GM12878 (cell line): ENCODE measurements at regions of chr12 and their contacts with region 1.

Region 1: DNA sequence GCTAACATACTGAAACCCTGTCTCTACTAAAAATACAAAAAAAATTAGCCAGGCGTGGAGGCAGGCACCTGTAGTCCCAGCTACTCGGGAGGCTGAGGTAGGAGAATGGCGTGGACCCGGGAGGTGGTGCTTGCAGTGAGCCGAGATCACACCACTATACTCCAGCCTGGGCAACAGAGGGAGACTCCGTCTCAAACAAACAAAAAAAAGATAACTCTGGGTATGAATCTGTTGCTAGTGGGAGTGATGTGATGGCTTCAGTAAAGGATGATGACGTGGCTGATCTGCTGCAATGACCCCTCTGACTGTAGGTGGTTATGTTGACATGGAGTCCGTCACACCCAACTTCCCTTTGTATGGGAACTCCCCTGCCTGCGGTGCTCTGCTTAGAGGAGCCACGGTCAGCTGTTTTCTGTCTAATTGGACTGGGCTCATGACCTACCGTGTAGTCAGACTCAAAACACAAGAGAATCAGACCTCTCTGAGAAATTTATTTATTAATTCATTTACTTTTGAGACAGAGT is 59.1 kb upstream of the MED13L start:
- DNase-seq: peak; percentile 67
- ATAC-seq: peak; percentile 91
- H3K4me3 ChIP-seq: no peak overlapping the region
- H3K27ac ChIP-seq: peak overlapping the region; percentile 51
- H3K4me1 ChIP-seq: peaks cover 37% of the 10 kb centered on the region
- H3K27me3 ChIP-seq: no peaks in the 10 kb centered on the region
- CTCF ChIP-seq: no peak
- EP300 ChIP-seq: peak in 1 of 2 experiments; percentile 43; a peak in 1 of 4 replicates
- POLR2A ChIP-seq: no peak
- RAD21 ChIP-seq: no peak

Region 2: DNA sequence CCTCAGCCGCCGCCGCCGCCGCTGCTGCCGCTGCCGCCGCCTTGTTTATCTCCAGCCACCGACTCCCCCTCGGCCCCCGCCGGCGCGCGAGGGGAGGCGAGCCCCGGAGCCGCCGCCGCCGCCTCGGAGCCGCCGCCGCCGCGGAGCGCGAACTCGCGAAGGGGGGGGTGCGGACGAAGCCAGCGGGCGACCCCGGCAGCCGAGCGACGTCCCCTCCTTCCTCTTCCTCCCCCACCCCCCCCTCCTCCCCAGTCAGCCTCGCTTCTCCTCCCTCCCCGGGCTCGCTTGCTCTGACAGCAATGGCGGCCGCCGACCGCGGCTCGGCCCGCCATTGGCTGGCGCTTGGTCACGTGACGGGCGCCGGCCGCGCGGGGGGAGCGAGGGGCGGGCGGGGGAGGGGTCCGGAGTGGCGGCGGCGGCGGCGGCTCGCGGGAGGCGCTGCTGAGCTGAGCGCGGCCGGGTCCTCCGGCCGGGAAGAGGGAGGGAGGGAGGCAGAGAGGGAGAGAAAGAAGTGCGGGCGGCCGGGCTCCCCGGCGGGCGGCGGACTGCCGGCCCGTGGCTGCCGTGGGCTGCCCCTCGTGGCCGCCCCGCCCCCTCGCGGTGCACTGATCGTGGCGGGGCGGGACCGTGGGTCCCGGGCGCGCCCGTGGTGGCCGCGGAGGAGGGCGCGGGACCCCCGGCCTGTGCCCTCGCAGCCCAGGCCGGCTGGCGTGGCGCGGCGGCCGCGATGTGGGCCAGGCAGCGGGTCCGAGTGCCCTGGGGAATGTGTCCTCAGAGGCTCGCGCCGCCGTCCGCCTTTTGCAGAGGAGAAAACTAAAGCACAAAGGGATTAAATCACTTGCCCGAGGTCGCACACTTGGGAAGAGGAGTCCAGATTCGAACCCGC is 59.0 kb before region 1 on chr12 and contains the start of gene MED13L:
- CTCF ChIA-PET with region 1: no interaction called
- POLR2A ChIA-PET with region 1: no interaction called
- RAD21 ChIA-PET with region 1: no interaction called
- SMC1A ChIA-PET with region 1: no interaction called
- in situ Hi-C with region 1: no loop called
- intact Hi-C with region 1: loop called (anchors 5 kb)
- DNase-seq: no peak
- ATAC-seq: peak; percentile 82
- H3K4me3 ChIP-seq: peak within 1 kb of the TSS; percentile 81
- H3K27ac ChIP-seq: peak within 1 kb of the TSS; percentile 43; the same call in 1 of the 2 replicates
- H3K4me1 ChIP-seq: no peaks in the 10 kb centered on the region
- H3K27me3 ChIP-seq: peaks cover 0 to 10% of the 10 kb centered on the region in 2 experiments; a peak in 2 of 4 replicates
- CTCF ChIP-seq: peak in 2 of 3 experiments; percentile 6 to 28; a peak in 2 of 6 replicates
- EP300 ChIP-seq: no peak
- POLR2A ChIP-seq: peak; percentile 75
- RAD21 ChIP-seq: 0 out of 2 replicates have a peak, but pooled peaks have one; percentile 25
- polyA plus RNA-seq, gene MED13L: 3.7 to 7.5 TPM

Region 3: DNA sequence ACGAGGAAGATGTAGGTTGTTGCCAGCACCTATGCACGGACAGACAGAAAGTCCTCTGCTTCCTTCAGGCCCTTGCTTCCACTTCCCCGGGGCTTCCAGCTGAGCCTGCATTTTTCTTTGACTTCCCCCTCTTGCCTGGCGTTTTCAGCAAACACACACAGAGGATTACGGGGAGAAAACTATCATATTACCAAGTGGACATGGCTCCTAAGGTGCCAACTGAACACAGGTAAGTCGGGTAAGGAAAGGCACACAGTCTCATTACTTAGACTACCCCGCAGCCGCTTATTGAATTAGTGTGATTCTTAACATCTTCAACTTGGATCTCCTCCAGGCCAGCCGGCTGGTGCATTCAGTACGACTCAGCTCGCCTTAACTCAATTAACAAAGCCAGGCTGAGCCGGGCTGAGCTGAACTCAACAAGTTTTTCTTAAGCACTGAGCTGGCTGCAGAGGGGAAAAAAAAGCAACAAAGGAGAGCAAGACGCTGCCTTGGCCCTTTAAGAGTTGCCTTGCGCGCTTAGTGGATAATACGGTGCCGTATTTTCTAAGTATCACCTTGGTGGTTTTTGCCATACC is 203.4 kb after region 1 on chr12:
- CTCF ChIA-PET with region 1: no interaction called
- POLR2A ChIA-PET with region 1: no interaction called
- RAD21 ChIA-PET with region 1: no interaction called
- SMC1A ChIA-PET with region 1: no interaction called
- in situ Hi-C with region 1: no loop called
- intact Hi-C with region 1: loop called (anchors 2 kb)
- DNase-seq: no peak
- ATAC-seq: no peak
- H3K4me3 ChIP-seq: no peak overlapping the region
- H3K27ac ChIP-seq: no peak overlapping the region
- H3K4me1 ChIP-seq: peaks cover 34% of the 10 kb centered on the region
- H3K27me3 ChIP-seq: no peaks in the 10 kb centered on the region
- CTCF ChIP-seq: no peak
- EP300 ChIP-seq: no peak
- POLR2A ChIP-seq: no peak
- RAD21 ChIP-seq: no peak

Region 4: GRCh38 chr12:116673681-116674111 is 337.1 kb after region 1 on chr12:
- CTCF ChIA-PET with region 1: no interaction called
- POLR2A ChIA-PET with region 1: no interaction called
- RAD21 ChIA-PET with region 1: no interaction called
- SMC1A ChIA-PET with region 1: no interaction called
- in situ Hi-C with region 1: no loop called
- intact Hi-C with region 1: loop called (anchors 1 kb)
- DNase-seq: no peak
- ATAC-seq: no peak
- H3K4me3 ChIP-seq: no peak overlapping the region
- H3K27ac ChIP-seq: peak overlapping the region; percentile 51
- H3K4me1 ChIP-seq: peaks cover 23% of the 10 kb centered on the region
- H3K27me3 ChIP-seq: no peaks in the 10 kb centered on the region
- CTCF ChIP-seq: peak in 1 of 3 experiments; percentile 18; a peak in 1 of 6 replicates
- EP300 ChIP-seq: no peak
- POLR2A ChIP-seq: no peak
- RAD21 ChIP-seq: 0 out of 2 replicates have a peak, but pooled peaks have one; percentile 7